Heart left ventricle (tissue), 16 donors: ENCODE measurements at regions of chr12 and their contacts with region 1.

Region 1: GRCh38 chr12:65823513-65824375 is 539 bp upstream of the HMGA2 start:
- DNase-seq: peak in 4 of 5 donors; percentile 11 to 58 (median 36)
- ATAC-seq: peak; percentile 43 to 71 (median 52)
- H3K4me3 ChIP-seq: peak overlapping the region; percentile 23 to 75 (median 56)
- H3K27ac ChIP-seq: no peak overlapping the region
- H3K4me1 ChIP-seq: peaks cover 0 to 36% (median 20%) of the 10 kb centered on the region in 12 donors
- H3K27me3 ChIP-seq: peaks cover 4 to 75% (median 45%) of the 10 kb centered on the region in 9 donors
- CTCF ChIP-seq: no peak
- POLR2A ChIP-seq: no peak

Region 2: DNA sequence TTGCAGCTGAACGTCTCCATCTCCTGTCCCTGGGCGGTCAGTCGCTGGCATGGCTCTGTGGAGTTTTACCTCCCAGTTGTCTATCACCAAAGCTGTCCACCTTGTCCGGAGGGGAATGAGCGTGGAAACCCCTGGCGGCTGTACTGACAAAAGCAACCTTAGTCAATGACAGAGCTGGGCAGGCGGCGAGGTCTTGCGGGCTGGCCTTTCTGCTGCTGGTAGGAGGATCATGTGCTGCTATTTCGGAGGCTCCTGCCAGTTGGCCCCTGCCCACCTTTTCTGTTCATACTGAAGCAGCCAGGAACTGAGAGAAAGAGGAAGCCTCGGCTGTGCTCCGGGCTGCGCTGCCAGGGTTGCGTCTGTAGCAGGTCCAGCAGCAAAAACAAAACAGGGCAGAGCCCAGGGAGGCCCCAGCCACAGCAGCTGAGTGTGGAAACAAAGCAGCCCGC is 58.2 kb after region 1 on chr12:
- intact Hi-C with region 1: loop called in 1 of 10 experiments (anchors 5 kb)
- DNase-seq: peak; percentile 73 to 88 (median 77)
- ATAC-seq: peak; percentile 85 to 94 (median 90)
- H3K4me3 ChIP-seq: peak overlapping the region; percentile 5 to 58 (median 44)
- H3K27ac ChIP-seq: peak overlapping the region in 11 of 12 donors; percentile 44 to 81 (median 69)
- H3K4me1 ChIP-seq: peaks cover 0 to 36% (median 12%) of the 10 kb centered on the region in 12 donors
- H3K27me3 ChIP-seq: no peaks in the 10 kb centered on the region
- CTCF ChIP-seq: peak in 6 of 12 donors; percentile 12 to 40 (median 28)
- POLR2A ChIP-seq: no peak

Region 3: GRCh38 chr12:65986047-65986446 is 162.3 kb after region 1 on chr12:
- intact Hi-C with region 1: loop called in 2 of 10 experiments (anchors 2 to 10 kb)
- DNase-seq: no peak
- ATAC-seq: no peak
- H3K4me3 ChIP-seq: no peak overlapping the region
- H3K27ac ChIP-seq: no peak overlapping the region
- H3K4me1 ChIP-seq: no peaks in the 10 kb centered on the region
- H3K27me3 ChIP-seq: peaks cover 0 to 3% (median 0%) of the 10 kb centered on the region in 9 donors
- CTCF ChIP-seq: peak in 1 of 12 donors; percentile 8
- POLR2A ChIP-seq: no peak